ENCODE measurements at regions of chr15 and their contacts with region 1.

Region 1: GRCh38 chr15:96619174-96619573 is 288.7 kb downstream of the NR2F2 start:
- DNase-seq: no peak
- H3K4me3 ChIP-seq: no peak overlapping the region
- H3K4me3 Mint-ChIP-seq: no peak overlapping the region
- H3K27ac Mint-ChIP-seq: no peak overlapping the region
- H3K4me1 ChIP-seq: no peaks in the 10 kb centered on the region
- H3K4me1 Mint-ChIP-seq: no peaks in the 10 kb centered on the region
- H3K27me3 ChIP-seq: no peaks in the 10 kb centered on the region; the same call in 1 of the 2 replicates
- H3K27me3 Mint-ChIP-seq: peaks cover 16% of the 10 kb centered on the region
- CTCF ChIP-seq: no peak

Region 2: DNA sequence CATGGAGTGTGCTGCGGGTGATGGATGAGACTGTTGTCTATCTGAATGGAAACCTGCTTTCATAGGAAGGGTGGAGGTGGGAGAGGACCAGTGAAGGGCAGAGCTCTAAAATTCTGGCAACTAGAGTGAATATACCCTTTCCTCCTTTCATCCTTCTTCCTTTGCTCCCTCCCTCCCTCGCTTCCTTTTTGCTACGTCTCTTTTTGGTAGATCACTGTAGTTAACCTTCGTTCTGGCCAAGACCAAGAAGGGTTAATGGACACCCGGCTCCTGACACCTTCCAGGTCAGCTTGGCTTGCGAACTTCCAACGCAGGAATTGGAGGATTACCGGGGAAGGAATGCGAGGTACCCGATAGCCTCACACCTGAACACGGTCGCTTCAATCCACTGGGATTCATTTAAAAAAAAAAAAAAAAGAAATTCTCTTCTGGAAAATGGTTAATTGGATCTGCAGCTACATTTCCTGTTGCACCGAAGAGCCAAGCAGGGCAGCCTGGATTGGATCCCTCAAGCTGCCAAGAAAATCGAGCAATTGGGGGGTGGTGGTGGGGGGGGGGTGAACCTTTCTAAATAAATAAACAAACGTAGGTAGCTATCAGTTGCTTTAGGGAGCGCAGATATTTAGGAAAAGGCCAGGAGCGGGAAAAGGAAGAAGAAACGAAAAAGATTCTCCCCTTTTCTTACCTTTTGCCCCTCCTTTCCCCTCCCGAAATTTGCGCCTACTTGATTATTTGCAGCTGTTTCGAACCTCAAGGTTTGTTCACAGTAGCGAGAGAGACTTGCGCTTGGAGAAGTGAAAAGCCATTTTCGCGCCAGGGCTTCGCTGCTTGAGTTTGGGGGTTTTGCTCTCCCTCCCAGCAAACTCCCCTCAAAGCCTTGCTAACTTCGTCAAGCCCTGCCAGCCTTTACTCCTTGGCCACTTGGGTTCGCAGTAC is 298.2 kb before region 1 on chr15:
- CTCF ChIA-PET with region 1: no interaction called
- POLR2A ChIA-PET with region 1: no interaction called
- intact Hi-C with region 1: no loop called
- DNase-seq: no peak
- H3K4me3 ChIP-seq: peak overlapping the region; percentile 35
- H3K4me3 Mint-ChIP-seq: peak overlapping the region; percentile 74
- H3K27ac Mint-ChIP-seq: peak overlapping the region; percentile 53
- H3K4me1 ChIP-seq: peaks cover 31% of the 10 kb centered on the region
- H3K4me1 Mint-ChIP-seq: peaks cover 23% of the 10 kb centered on the region
- H3K27me3 ChIP-seq: no peaks in the 10 kb centered on the region
- H3K27me3 Mint-ChIP-seq: no peaks in the 10 kb centered on the region
- CTCF ChIP-seq: no peak

Region 3: GRCh38 chr15:96657096-96657495 is 37.9 kb after region 1 on chr15:
- CTCF ChIA-PET with region 1: no interaction called
- POLR2A ChIA-PET with region 1: no interaction called
- intact Hi-C with region 1: loop called (anchors 1 kb)
- DNase-seq: no peak
- H3K4me3 ChIP-seq: no peak overlapping the region
- H3K4me3 Mint-ChIP-seq: no peak overlapping the region
- H3K27ac Mint-ChIP-seq: no peak overlapping the region
- H3K4me1 ChIP-seq: no peaks in the 10 kb centered on the region
- H3K4me1 Mint-ChIP-seq: no peaks in the 10 kb centered on the region
- H3K27me3 ChIP-seq: no peaks in the 10 kb centered on the region
- H3K27me3 Mint-ChIP-seq: peaks cover 4% of the 10 kb centered on the region
- CTCF ChIP-seq: no peak